Activated CD8-positive, alpha-beta memory T cell treated with anti-CD3 and anti-CD28 coated beads, Interleukin-2, amount 10 ng/mL, durations not matched to agents 7 days and 5 days (primary cell): ENCODE measurements at regions of chr13 and their contacts with region 1.

Region 1: DNA sequence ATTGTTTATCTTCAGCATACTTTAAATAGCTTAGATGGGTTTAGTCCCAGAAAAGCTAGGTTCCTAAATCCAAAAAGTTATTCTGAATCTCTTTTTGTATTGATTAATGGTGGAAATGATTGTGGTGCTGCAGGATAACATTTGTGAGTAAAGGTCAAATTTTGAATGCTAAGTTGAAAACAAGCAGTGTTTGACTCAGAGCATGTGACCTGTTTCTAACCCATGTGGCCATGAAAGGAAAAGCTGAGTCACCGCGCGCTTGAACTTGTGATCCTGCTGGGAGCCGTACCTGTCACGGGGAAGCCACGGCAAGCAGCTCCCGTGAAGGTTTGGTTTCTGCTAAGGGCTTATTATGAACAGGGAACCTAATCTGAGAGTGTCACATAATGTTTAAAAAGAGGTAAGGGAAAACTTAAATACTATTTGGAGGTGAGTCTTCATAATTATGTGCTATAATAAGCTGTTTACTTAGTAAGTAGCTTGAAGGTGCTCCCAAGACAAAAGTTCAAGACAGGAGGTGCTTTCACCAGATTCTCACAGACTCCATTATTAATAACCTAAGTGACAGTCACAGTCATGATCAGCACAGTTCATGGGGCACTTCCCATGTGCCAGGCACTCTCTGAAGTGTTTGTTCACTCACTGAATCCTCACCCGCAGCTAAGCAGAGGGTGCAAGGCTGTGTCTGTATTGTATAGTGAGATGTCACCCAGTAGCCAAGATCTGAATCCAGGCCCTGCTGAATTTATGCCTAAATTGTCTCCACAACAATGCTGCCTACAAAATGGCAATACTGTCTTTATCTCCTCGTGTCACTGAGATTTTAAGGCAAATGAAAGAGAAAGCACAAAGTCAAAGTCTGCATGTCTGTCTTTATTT is 286.5 kb downstream of the MYO16 start:
- DNase-seq: peak; percentile 93
- ATAC-seq: peak; percentile 94
- H3K4me3 Mint-ChIP-seq: peak overlapping the region; percentile 53
- H3K27ac Mint-ChIP-seq: peak overlapping the region; percentile 85
- H3K4me1 Mint-ChIP-seq: peaks cover 17% of the 10 kb centered on the region
- H3K27me3 Mint-ChIP-seq: peaks cover 9% of the 10 kb centered on the region

Region 2: GRCh38 chr13:108895220-108895704 is 20.6 kb before region 1 on chr13:
- CTCF ChIA-PET with region 1: interaction called, 18 read pairs
- DNase-seq: no peak
- ATAC-seq: no peak
- H3K4me3 Mint-ChIP-seq: no peak overlapping the region
- H3K27ac Mint-ChIP-seq: no peak overlapping the region
- H3K4me1 Mint-ChIP-seq: peaks cover 13% of the 10 kb centered on the region
- H3K27me3 Mint-ChIP-seq: no peaks in the 10 kb centered on the region

Region 3: DNA sequence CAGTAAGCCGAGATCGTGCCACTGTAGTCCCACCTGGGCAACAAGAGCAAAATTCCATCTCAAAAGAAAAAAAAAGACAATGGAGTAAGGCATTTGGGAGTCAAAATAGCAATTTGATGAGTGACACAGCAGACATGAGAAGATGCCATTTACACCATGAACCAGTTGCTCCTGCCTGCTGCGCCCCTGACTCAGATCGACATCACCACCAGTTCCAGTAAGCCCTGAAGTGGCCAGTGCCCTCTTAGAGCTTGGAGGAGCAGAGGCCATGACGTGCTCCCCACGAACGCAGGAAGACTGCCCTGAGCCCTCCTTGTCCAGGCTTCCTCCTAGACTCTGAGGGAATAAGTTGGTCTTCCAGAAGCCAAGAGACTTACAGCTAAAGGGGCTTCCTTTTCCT is 52.7 kb after region 1 on chr13:
- CTCF ChIA-PET with region 1: no interaction called
- DNase-seq: no peak
- ATAC-seq: no peak
- H3K4me3 Mint-ChIP-seq: no peak overlapping the region
- H3K27ac Mint-ChIP-seq: no peak overlapping the region
- H3K4me1 Mint-ChIP-seq: no peaks in the 10 kb centered on the region
- H3K27me3 Mint-ChIP-seq: no peaks in the 10 kb centered on the region